H1 (cell line): ENCODE measurements at regions of chr2 and their contacts with region 1.

Region 1: DNA sequence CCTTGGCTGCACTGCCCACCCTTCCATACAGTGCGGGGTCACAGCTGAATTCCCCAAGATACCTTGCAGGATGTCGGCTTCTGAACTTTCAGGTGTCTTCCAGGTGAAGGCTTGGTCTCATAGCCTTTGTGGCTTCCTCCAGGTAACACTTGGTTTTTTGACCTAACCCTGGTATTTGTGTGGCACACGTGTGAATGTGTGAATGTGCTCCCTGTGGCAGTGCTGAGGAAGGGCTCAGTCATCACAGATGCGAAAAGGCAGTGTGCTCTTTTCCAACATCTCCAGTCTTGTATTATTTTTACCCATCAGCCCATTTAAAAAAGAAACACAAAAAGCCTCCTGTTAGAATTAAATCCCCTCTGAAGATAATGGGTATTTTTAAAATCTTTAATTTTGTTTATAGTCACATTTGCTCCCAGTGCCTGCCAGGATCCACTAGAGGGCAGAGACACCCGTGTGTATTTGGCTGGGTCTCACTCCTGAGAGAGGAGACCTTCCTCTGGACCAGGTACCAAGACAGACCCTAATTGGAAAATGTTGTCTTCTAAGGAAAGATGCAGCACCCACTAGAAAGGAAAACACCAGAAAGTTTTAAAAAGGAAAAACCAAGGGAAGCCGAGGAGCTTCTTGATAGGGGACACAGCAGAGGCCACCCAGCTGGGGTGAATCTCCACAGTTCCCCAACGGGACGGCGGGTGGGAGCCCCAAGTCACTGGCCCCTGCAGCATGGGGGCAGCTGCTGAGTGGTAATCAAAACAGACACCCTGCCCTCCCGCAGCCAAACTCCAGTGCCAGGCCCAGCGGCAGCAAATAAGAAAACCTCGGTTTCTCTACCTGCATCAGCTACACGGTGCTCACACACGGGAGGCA is 27.7 kb downstream of the FAM110C start:
- DNase-seq: no peak
- H3K4me3 ChIP-seq: no peak overlapping the region
- H3K27ac ChIP-seq: no peak overlapping the region
- H3K4me1 ChIP-seq: peaks cover 0 to 4% (median 0%) of the 10 kb centered on the region in 4 experiments; a peak in 3 of 7 replicates
- H3K27me3 ChIP-seq: no peaks in the 10 kb centered on the region
- CTCF ChIP-seq: peak; percentile 27 to 64 (median 50)
- EP300 ChIP-seq: no peak
- POLR2A ChIP-seq: no peak
- RAD21 ChIP-seq: peak; percentile 75 to 79

Region 2: DNA sequence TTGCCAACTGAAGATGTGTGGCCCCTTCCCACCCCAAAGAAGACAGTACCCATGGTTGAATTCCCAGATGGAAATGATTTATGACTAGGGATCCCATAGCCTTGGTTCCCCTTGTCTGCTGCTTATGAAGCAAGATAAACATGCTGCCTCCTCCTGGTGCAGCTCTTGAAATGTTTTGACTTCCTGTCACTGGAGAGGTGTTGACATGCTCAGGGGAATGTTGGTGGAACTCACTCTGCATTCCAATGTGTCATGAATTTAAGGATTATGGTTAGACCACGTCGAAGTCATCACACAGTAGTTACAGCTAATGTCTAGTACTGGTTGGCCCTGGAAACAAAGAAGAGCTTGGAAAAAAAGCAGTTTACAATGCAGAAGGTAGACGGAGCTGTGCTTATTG is 96.7 kb after region 1 on chr2:
- CTCF ChIA-PET with region 1: interaction called, 28 read pairs
- POLR2A ChIA-PET with region 1: no interaction called
- DNase-seq: no peak
- H3K4me3 ChIP-seq: no peak overlapping the region
- H3K27ac ChIP-seq: no peak overlapping the region
- H3K4me1 ChIP-seq: peaks cover 0 to 5% (median 4%) of the 10 kb centered on the region in 4 experiments; a peak in 3 of 7 replicates
- H3K27me3 ChIP-seq: no peaks in the 10 kb centered on the region
- CTCF ChIP-seq: peak in 1 of 3 experiments; percentile 53; a peak in 2 of 4 replicates
- EP300 ChIP-seq: no peak
- POLR2A ChIP-seq: no peak
- RAD21 ChIP-seq: peak; percentile 41 to 55

Region 3: GRCh38 chr2:141611-142010 is 123.0 kb after region 1 on chr2:
- CTCF ChIA-PET with region 1: interaction called, 108 read pairs
- POLR2A ChIA-PET with region 1: no interaction called
- DNase-seq: no peak
- H3K4me3 ChIP-seq: no peak overlapping the region
- H3K27ac ChIP-seq: no peak overlapping the region
- H3K4me1 ChIP-seq: peaks cover 0 to 7% (median 4%) of the 10 kb centered on the region in 4 experiments; a peak in 5 of 7 replicates
- H3K27me3 ChIP-seq: no peaks in the 10 kb centered on the region
- CTCF ChIP-seq: no peak
- EP300 ChIP-seq: no peak
- POLR2A ChIP-seq: no peak
- RAD21 ChIP-seq: no peak

Region 4: GRCh38 chr2:201648-202433 is 183.2 kb after region 1 on chr2:
- CTCF ChIA-PET with region 1: no interaction called
- POLR2A ChIA-PET with region 1: no interaction called
- DNase-seq: no peak
- H3K4me3 ChIP-seq: no peak overlapping the region
- H3K27ac ChIP-seq: no peak overlapping the region
- H3K4me1 ChIP-seq: peaks cover 0 to 2% (median 0%) of the 10 kb centered on the region in 4 experiments; a peak in 1 of 7 replicates
- H3K27me3 ChIP-seq: no peaks in the 10 kb centered on the region
- CTCF ChIP-seq: no peak
- EP300 ChIP-seq: no peak
- POLR2A ChIP-seq: no peak
- RAD21 ChIP-seq: no peak

Region 5: DNA sequence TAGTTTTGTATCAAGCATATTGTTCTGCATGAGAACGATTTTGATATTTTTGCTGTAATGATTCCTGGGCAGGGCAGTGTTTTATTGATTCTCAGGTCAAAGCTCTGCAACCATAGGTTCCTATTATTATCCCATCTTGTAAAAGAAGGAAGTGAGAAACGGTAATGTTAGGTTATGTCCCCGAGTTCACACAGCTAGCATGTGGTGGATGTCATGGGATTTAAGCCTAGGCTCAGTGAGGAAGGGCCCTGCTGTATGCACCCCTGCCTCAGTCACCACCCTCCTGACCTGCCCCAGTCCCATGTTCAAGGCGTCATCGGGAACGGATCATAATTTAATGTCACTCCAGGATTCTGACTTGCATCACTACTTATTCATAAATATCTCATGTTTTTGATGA is 256.8 kb after region 1 on chr2:
- CTCF ChIA-PET with region 1: interaction called, 12 read pairs
- POLR2A ChIA-PET with region 1: no interaction called
- DNase-seq: no peak
- H3K4me3 ChIP-seq: no peak overlapping the region
- H3K27ac ChIP-seq: no peak overlapping the region
- H3K4me1 ChIP-seq: no peaks in the 10 kb centered on the region
- H3K27me3 ChIP-seq: no peaks in the 10 kb centered on the region
- CTCF ChIP-seq: no peak
- EP300 ChIP-seq: no peak
- POLR2A ChIP-seq: no peak
- RAD21 ChIP-seq: no peak